Left colon (tissue), 2 donors: ENCODE measurements at regions of chr11 and their contacts with region 1.

Region 1: GRCh38 chr11:12673924-12674570 is at the start of gene TEAD1:
- DNase-seq: peak; percentile 94 to 97
- ATAC-seq: peak; percentile 89
- total RNA-seq, gene TEAD1: 43.0 to 51.3 TPM

Region 2: GRCh38 chr11:12618743-12619540 is 55.1 kb before region 1 on chr11:
- intact Hi-C with region 1: no loop called
- DNase-seq: no peak
- ATAC-seq: no peak

Region 3: DNA sequence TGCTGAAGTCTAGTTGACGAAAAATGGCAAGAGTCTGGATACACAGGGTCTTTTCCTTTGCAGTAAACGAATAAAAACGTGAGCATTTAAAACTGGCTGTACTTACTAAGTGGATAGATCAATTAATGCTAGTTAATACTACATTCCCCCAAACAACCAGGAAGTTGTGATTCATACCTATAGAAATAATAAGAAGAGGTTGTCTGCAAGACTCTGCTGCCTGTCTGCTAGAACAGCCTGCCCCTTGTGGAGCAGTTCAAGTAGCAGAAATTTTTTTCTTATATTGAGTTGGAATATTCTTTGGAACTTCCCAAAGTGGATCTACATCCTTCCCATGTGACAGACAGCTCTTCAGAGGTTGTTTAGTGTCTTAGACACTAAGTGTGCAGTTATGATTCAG is 87.0 kb after region 1 on chr11:
- intact Hi-C with region 1: no loop called
- DNase-seq: no peak
- ATAC-seq: no peak

Region 4: GRCh38 chr11:12824281-12825041 is 150.4 kb after region 1 on chr11:
- intact Hi-C with region 1: loop called in 1 of 2 experiments (anchors 5 kb)
- DNase-seq: peak; percentile 28 to 33
- ATAC-seq: peak; percentile 29